Activated naive CD8-positive, alpha-beta T cell treated with anti-CD3 and anti-CD28 coated beads, Interleukin-2, amount 10 ng/mL, durations not matched to agents 7 days and 5 days (primary cell): ENCODE measurements at regions of chr17 and their contacts with region 1.

Region 1: GRCh38 chr17:7484067-7484918 is at the start of gene POLR2A:
- DNase-seq: peak; percentile 99
- ATAC-seq: peak; percentile 69
- H3K4me3 Mint-ChIP-seq: peak within 1 kb of the TSS; percentile 94
- H3K27ac Mint-ChIP-seq: peak within 1 kb of the TSS; percentile 99
- H3K4me1 Mint-ChIP-seq: peaks cover 47% of the 10 kb centered on the region
- H3K27me3 Mint-ChIP-seq: no peaks in the 10 kb centered on the region
- total RNA-seq, gene POLR2A: 192 to 214 TPM

Region 2: GRCh38 chr17:7336240-7337175 is 147.8 kb before region 1 on chr17 and contains the start of gene ACAP1:
- POLR2A ChIA-PET with region 1: interaction called, 25 read pairs
- DNase-seq: peak; percentile 85
- ATAC-seq: peak; percentile 90
- H3K4me3 Mint-ChIP-seq: peak within 1 kb of the TSS; percentile 97
- H3K27ac Mint-ChIP-seq: peak within 1 kb of the TSS; percentile 96
- H3K4me1 Mint-ChIP-seq: peaks cover 43% of the 10 kb centered on the region
- H3K27me3 Mint-ChIP-seq: no peaks in the 10 kb centered on the region
- total RNA-seq, gene ACAP1: 710 to 756 TPM

Region 3: GRCh38 chr17:7363311-7363710 is 121.0 kb before region 1 on chr17:
- POLR2A ChIA-PET with region 1: no interaction called
- DNase-seq: no peak
- ATAC-seq: no peak
- H3K4me3 Mint-ChIP-seq: no peak overlapping the region
- H3K27ac Mint-ChIP-seq: no peak overlapping the region
- H3K4me1 Mint-ChIP-seq: peaks cover 7% of the 10 kb centered on the region
- H3K27me3 Mint-ChIP-seq: peaks cover 5% of the 10 kb centered on the region

Region 4: DNA sequence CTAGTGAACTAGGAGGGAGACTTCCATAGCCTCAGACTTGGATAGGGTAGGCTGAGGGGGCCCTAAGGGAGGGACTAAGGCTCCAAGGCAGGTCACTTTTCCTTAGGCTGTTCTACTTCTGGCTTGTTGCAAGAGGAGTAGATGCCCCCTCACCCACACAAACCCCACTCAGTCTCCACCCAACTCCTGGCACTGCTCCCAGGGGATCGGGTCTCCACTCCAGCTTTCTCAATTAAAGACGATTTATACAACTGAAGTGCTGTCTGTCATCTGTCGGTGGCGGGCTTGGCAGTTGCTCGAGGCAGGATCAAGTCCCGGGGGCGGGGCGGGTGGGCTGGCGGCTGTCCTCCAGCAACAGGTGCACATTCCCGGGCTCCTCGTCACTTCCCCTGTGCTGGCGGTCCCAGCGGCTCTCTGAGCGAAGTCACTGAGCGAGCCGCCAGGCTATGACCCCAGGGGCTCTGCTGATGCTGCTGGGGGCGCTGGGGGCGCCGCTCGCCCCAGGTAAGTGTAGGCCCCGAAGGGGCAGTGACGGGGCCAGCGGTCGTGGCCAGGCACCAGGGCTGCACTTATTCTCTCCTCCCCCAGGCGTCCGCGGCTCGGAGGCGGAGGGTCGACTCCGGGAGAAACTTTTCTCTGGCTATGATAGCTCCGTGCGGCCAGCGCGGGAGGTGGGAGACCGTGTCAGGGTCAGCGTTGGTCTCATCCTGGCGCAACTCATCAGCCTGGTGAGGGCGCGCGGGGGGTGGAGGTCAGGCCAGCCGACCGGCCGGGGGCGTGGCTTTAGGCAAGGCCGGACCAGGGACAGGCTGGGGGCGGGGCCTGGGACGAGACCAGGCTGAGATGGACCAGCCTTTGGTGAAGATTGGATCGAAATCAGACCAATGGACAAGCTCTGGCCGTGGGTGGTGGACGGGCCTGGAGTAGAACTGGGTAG is 39.3 kb before region 1 on chr17 and contains the start of gene CHRNB1:
- POLR2A ChIA-PET with region 1: interaction called, 60 read pairs
- DNase-seq: peak; percentile 53
- ATAC-seq: peak; percentile 10
- H3K4me3 Mint-ChIP-seq: peak within 1 kb of the TSS; percentile 80
- H3K27ac Mint-ChIP-seq: peak within 1 kb of the TSS; percentile 10
- H3K4me1 Mint-ChIP-seq: peaks cover 29% of the 10 kb centered on the region
- H3K27me3 Mint-ChIP-seq: peaks cover 24% of the 10 kb centered on the region
- total RNA-seq, gene CHRNB1: 15.2 to 15.7 TPM

Region 5: DNA sequence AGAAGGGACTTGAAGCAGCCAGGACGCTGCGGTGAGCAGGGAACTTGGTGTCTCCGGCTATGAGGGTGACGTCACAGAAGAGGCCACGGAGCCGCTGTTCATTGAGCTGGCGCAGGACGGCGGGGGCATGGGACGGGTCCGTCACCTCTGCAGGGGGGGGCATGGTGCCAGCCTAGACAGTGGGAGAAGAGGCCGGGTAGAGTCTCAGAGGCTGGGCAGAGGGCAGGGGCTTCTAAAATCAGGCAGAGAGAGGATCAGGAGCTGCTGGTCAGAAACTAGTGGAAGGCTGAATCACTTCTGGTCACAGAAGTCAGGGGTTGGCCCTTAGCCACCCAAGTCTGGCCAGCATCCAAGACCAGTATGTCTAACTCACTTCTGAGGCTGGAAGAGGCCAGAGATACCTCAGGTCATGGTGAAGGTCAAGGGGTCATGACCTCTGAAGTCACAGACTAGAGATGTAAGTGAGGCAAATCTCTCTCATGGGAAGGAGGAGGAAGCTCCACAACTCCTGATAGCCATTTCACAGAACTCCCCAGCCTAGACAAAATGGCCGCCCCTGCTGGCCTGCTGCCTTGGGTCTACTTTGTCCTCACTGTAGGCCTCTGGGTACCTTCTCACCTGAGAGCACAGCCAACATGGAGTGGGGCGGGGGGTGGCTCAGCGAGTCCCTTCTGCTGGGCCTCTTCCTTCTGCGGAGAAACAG is 17.5 kb before region 1 on chr17:
- POLR2A ChIA-PET with region 1: interaction called, 15 read pairs
- DNase-seq: no peak
- ATAC-seq: no peak
- H3K4me3 Mint-ChIP-seq: no peak overlapping the region
- H3K27ac Mint-ChIP-seq: peak overlapping the region; percentile 48
- H3K4me1 Mint-ChIP-seq: peaks cover 10% of the 10 kb centered on the region
- H3K27me3 Mint-ChIP-seq: no peaks in the 10 kb centered on the region

Region 6: DNA sequence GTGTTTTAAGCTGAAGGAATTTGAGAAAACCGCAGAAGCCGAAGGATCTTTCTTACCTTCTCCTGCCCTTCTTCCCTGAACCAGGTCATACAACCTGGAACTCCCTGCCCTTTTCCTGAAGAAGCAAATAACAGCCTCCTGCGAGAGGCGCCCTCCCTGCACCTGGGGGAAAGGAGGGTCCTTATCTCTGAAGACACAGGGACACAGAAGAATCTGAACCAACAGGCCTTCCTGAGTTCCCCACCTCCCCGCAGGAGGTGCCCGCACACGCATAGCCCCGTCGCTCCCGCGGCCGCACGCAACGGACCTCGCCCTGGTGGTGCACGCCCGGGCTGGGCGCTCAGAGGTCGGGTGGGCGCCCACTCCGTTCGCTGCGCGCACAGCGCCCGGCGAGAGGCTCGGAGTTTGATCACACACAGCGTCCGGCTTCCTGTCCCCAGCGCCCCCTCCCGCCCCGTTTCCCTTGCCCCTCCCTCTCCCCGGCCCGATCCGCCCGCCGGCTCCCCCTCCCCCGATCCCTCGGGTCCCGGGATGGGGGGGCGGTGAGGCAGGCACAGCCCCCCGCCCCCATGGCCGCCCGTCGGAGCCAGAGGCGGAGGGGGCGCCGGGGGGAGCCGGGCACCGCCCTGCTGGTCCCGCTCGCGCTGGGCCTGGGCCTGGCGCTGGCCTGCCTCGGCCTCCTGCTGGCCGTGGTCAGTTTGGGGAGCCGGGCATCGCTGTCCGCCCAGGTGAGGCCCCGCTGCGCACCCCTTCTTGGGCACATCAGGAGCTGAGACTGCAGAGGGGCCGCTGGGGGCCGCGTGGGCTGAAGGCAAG is 64.5 kb after region 1 on chr17 and contains the start of gene TNFSF12:
- POLR2A ChIA-PET with region 1: interaction called, 12 read pairs
- DNase-seq: peak; percentile 77
- ATAC-seq: peak; percentile 62
- H3K4me3 Mint-ChIP-seq: peak within 1 kb of the TSS; percentile 100
- H3K27ac Mint-ChIP-seq: peak within 1 kb of the TSS; percentile 97
- H3K4me1 Mint-ChIP-seq: peaks cover 43% of the 10 kb centered on the region
- H3K27me3 Mint-ChIP-seq: peaks cover 4% of the 10 kb centered on the region
- total RNA-seq, gene TNFSF12: 93.0 to 95.7 TPM

Region 7: DNA sequence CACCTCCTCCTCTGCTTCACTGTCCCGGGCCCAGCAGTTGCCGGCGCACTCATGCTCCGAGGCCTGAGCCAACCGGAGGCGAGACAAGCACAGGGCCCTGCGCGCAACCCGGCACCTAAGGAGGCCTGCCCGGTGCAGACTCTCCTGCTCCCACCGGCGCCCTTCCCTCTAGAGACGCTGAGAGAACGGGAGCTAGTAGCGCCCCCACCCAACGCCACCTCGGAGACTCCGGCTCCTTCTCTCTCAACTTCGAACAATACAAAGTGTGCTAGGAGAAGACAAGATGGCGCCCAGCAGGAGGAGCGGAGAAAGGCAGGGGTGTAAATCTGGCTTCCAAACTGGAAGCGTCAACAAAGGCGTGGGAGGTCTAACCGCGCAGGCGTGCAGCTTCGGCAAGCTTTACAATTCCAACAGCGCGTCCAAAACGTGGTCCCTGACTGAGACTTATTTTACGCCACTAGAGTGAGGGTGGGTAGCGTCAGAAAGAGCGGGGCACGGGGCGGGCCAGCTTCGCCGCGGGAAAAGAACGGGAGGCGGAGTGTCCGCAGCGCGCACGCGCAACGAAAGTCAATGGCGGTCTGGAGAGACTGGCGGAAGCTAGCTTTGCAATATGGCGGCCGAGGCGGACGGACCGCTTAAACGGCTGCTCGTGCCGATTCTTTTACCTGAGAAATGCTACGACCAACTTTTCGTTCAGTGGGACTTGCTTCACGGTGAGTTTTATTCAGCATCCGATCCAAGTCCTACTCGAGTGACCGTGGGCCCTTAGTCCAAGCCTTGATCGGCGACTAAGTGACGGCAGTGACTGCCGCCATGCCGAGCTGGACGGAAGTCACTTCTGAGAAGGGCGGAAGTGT is 99.2 kb after region 1 on chr17 and contains the start of gene MPDU1:
- POLR2A ChIA-PET with region 1: interaction called, 14 read pairs
- DNase-seq: peak; percentile 95
- ATAC-seq: peak; percentile 85
- H3K4me3 Mint-ChIP-seq: peak within 1 kb of the TSS; percentile 99
- H3K27ac Mint-ChIP-seq: peak within 1 kb of the TSS; percentile 100
- H3K4me1 Mint-ChIP-seq: peaks cover 47% of the 10 kb centered on the region
- H3K27me3 Mint-ChIP-seq: no peaks in the 10 kb centered on the region
- total RNA-seq, gene MPDU1: 50.2 TPM